IMR-90 (cell line): ENCODE measurements at regions of chr17 and their contacts with region 1.

Region 1: GRCh38 chr17:62791751-62792445 is 16.2 kb downstream of the MARCHF10 start:
- DNase-seq: peak; percentile 100
- ATAC-seq: peak; percentile 52
- H3K4me3 ChIP-seq: no peak overlapping the region
- H3K27ac ChIP-seq: peak overlapping the region; percentile 92
- H3K4me1 ChIP-seq: peaks cover 14% of the 10 kb centered on the region
- H3K27me3 ChIP-seq: no peaks in the 10 kb centered on the region
- CTCF ChIP-seq: no peak
- POLR2A ChIP-seq: no peak; the same call in 1 of the 2 replicates
- RAD21 ChIP-seq: peak; percentile 26

Region 2: DNA sequence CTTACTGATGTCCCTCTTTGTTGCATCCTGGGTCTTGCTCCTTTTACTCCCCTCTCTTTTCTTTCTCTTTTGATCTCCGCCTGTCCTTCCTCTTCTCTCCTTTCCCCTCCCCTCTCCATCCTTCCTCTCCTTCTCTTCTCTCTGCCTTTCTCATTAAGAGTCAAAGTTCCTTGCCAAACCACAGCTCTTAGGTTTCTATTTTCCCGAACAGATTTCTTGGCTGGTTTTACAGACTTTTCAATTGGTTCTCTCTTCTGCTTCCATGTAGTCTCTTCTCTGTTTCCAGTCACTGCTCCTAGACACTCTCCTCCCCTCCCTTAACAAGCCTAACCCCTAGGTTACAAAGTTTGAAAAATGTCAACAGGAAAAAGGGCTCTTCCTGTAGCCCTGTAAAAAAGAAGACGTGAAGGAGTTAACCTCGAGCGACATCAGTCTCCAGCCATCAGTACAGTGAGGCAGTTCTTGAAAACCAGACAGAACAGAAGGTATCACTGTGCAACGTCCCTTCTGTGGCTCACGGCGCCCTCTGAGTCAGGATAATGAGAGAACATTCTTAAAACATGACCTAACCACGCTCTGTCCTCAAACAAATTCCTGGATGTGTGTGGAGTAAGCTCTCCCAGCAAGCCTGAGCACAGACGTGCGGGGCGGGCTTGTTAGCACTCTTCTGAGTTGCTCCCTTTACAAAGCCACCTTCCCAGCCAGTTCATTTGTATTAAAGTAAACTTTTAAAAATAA is 27.7 kb after region 1 on chr17:
- CTCF ChIA-PET with region 1: no interaction called
- POLR2A ChIA-PET with region 1: no interaction called
- dilution Hi-C with region 1: no loop called
- in situ Hi-C with region 1: no loop called
- intact Hi-C with region 1: loop called (anchors 2 kb)
- DNase-seq: peak; percentile 99
- ATAC-seq: peak; percentile 94
- H3K4me3 ChIP-seq: peak overlapping the region; percentile 24; the same call in 1 of the 2 replicates
- H3K27ac ChIP-seq: peak overlapping the region; percentile 70
- H3K4me1 ChIP-seq: peaks cover 25% of the 10 kb centered on the region
- H3K27me3 ChIP-seq: no peaks in the 10 kb centered on the region
- CTCF ChIP-seq: no peak
- POLR2A ChIP-seq: peak; percentile 82
- RAD21 ChIP-seq: peak; percentile 47